ENCODE measurements at regions of chr3 and their contacts with region 1.

Region 1: DNA sequence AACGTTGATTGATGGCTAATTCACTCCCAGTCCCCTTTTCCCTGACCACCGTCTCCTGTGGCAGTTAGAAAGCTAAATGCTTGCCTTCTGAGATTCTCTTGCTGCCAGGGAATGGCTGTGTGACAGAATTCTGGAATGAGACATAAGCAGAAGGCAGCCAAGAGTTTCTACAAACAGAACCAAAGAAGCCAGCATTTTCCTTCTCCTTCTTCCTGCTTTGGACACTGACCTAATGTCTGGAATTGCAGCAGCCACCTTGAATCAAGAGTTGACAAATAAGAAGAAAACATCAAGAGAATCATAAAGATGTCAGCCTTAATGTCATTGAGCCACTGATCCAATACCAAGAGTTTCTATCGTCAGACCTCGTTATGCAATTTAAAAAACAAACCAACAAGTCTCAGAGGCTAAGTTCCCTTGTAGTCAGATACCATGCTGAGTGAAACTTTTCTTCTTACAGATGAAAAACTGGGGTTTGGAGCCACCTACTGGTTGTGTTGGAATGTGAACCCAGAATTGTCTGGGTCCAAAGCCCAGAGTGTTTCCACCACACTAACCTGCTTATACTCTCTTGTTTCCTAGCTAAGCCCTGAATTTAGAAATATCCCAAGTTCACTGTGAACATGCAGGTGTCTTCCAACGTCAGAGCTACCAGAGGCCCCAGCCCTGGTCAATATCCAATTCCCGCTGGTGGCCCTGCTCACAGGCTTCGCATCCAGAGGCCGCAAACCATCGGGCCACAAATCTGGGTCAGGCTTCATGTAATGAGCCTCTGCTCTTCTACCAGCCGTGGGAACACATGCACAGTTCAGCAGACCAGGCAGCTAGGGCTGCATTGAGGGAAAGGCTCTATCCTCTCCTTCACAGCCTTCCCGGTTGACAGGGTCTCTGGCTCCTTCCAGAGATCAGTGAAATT is 42.5 kb downstream of the MCF2L2 start:
- DNase-seq: peak; percentile 18 to 77 (median 63)
- ATAC-seq: peak; percentile 87
- H3K4me3 ChIP-seq: no peak overlapping the region
- H3K4me3 Mint-ChIP-seq: no peak overlapping the region
- H3K27ac ChIP-seq: no peak overlapping the region
- H3K27ac Mint-ChIP-seq: no peak overlapping the region
- H3K4me1 ChIP-seq: no peaks in the 10 kb centered on the region
- H3K4me1 Mint-ChIP-seq: peaks cover 2% of the 10 kb centered on the region
- H3K27me3 ChIP-seq: no peaks in the 10 kb centered on the region
- H3K27me3 Mint-ChIP-seq: no peaks in the 10 kb centered on the region
- CTCF ChIP-seq: peak; percentile 76

Region 2: GRCh38 chr3:182909318-182910040 is 476.5 kb before region 1 on chr3:
- CTCF ChIA-PET with region 1: no interaction called
- POLR2A ChIA-PET with region 1: no interaction called
- intact Hi-C with region 1: loop called (anchors 2 kb)
- DNase-seq: peak in 2 of 9 experiments; percentile 28 to 49
- ATAC-seq: peak; percentile 41
- H3K4me3 ChIP-seq: no peak overlapping the region
- H3K4me3 Mint-ChIP-seq: no peak overlapping the region
- H3K27ac ChIP-seq: no peak overlapping the region
- H3K27ac Mint-ChIP-seq: no peak overlapping the region
- H3K4me1 ChIP-seq: peaks cover 20% of the 10 kb centered on the region
- H3K4me1 Mint-ChIP-seq: peaks cover 43% of the 10 kb centered on the region
- H3K27me3 ChIP-seq: no peaks in the 10 kb centered on the region
- H3K27me3 Mint-ChIP-seq: no peaks in the 10 kb centered on the region
- CTCF ChIP-seq: peak; percentile 70

Region 3: GRCh38 chr3:183122257-183122932 is 263.6 kb before region 1 on chr3:
- CTCF ChIA-PET with region 1: interaction called, 156 read pairs
- POLR2A ChIA-PET with region 1: no interaction called
- intact Hi-C with region 1: loop called (anchors 1 kb)
- DNase-seq: peak in 2 of 9 experiments; percentile 58 to 69
- ATAC-seq: peak; percentile 65
- H3K4me3 ChIP-seq: no peak overlapping the region
- H3K4me3 Mint-ChIP-seq: no peak overlapping the region
- H3K27ac ChIP-seq: no peak overlapping the region
- H3K27ac Mint-ChIP-seq: no peak overlapping the region
- H3K4me1 ChIP-seq: no peaks in the 10 kb centered on the region
- H3K4me1 Mint-ChIP-seq: no peaks in the 10 kb centered on the region
- H3K27me3 ChIP-seq: no peaks in the 10 kb centered on the region
- H3K27me3 Mint-ChIP-seq: peaks cover 6% of the 10 kb centered on the region
- CTCF ChIP-seq: peak; percentile 93

Region 4: GRCh38 chr3:183188895-183189462 is 197.0 kb before region 1 on chr3:
- CTCF ChIA-PET with region 1: interaction called, 188 read pairs
- POLR2A ChIA-PET with region 1: interaction called, 3 read pairs
- intact Hi-C with region 1: loop called (anchors 1 kb)
- DNase-seq: peak in 4 of 9 experiments; percentile 24 to 50 (median 38)
- ATAC-seq: no peak
- H3K4me3 ChIP-seq: no peak overlapping the region
- H3K4me3 Mint-ChIP-seq: no peak overlapping the region
- H3K27ac ChIP-seq: no peak overlapping the region
- H3K27ac Mint-ChIP-seq: no peak overlapping the region
- H3K4me1 ChIP-seq: no peaks in the 10 kb centered on the region
- H3K4me1 Mint-ChIP-seq: no peaks in the 10 kb centered on the region
- H3K27me3 ChIP-seq: no peaks in the 10 kb centered on the region
- H3K27me3 Mint-ChIP-seq: no peaks in the 10 kb centered on the region
- CTCF ChIP-seq: no peak

Region 5: DNA sequence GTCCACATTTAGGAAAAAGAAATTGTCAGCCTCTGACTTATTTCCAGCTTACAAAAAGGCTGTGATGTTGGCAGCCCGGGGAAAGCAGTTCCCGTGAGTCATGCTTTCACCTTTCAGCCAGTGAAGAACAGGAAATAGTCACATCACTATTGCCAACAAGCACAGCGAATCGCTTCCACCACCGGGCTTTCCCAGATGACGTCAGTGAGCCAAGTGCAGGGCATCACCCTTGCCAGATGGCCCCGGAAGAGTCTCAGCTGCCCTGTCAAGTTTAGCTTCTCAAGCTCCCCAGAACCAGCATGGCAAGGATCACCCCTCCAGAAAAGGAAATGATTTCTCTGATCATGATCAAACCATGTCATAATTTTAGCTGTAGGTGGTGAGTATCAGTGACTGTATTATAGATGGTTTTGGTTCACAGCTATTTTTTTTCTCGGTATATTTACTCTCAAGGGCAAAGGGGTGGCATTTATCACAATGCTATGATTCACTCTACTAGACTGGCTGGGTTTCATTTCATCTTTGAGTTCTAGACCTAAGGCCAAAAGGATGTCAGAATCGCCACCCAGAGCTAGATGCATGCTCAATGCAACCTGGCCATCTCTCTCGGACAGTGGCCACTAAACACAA is 100.0 kb before region 1 on chr3:
- CTCF ChIA-PET with region 1: interaction called, 3 read pairs
- POLR2A ChIA-PET with region 1: no interaction called
- intact Hi-C with region 1: loop called in 1 of 2 experiments (anchors 5 kb)
- DNase-seq: peak; percentile 78 to 98 (median 88)
- ATAC-seq: peak; percentile 91
- H3K4me3 ChIP-seq: peak overlapping the region in 1 of 2 experiments; percentile 6
- H3K4me3 Mint-ChIP-seq: peak overlapping the region; percentile 58
- H3K27ac ChIP-seq: peak overlapping the region; percentile 2 to 90
- H3K27ac Mint-ChIP-seq: peak overlapping the region; percentile 95
- H3K4me1 ChIP-seq: peaks cover 9% of the 10 kb centered on the region
- H3K4me1 Mint-ChIP-seq: peaks cover 24% of the 10 kb centered on the region
- H3K27me3 ChIP-seq: no peaks in the 10 kb centered on the region
- H3K27me3 Mint-ChIP-seq: no peaks in the 10 kb centered on the region
- CTCF ChIP-seq: no peak

Region 6: GRCh38 chr3:183766745-183767606 is 381.0 kb after region 1 on chr3:
- CTCF ChIA-PET with region 1: interaction called, 7 read pairs
- POLR2A ChIA-PET with region 1: no interaction called
- intact Hi-C with region 1: loop called (anchors 1 to 2 kb)
- DNase-seq: peak; percentile 42 to 82 (median 72)
- ATAC-seq: peak; percentile 91
- H3K4me3 ChIP-seq: no peak overlapping the region
- H3K4me3 Mint-ChIP-seq: no peak overlapping the region
- H3K27ac ChIP-seq: no peak overlapping the region
- H3K27ac Mint-ChIP-seq: no peak overlapping the region
- H3K4me1 ChIP-seq: no peaks in the 10 kb centered on the region
- H3K4me1 Mint-ChIP-seq: peaks cover 4% of the 10 kb centered on the region
- H3K27me3 ChIP-seq: no peaks in the 10 kb centered on the region
- H3K27me3 Mint-ChIP-seq: no peaks in the 10 kb centered on the region
- CTCF ChIP-seq: peak; percentile 77

Region 7: DNA sequence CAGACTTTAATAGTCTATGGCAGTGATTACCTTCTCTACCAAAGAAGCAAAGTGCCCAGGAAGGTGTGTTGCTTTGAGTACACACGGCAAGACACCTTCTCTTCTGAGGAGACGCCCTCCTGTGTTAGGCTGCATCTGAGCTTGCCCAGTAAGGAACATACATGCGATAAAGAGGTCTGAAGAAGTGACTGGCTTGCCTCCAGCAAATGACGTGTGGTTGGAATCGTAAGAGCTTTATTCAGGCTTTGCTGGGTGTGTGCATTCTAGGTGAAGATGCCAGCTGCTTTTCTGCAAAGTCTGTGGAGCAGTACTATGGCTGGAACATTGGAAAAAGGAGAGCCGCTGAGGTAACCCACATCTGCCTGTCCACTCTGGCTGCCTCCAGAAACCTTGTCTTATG is 417.0 kb after region 1 on chr3:
- CTCF ChIA-PET with region 1: no interaction called
- POLR2A ChIA-PET with region 1: no interaction called
- intact Hi-C with region 1: no loop called
- DNase-seq: no peak
- ATAC-seq: no peak
- H3K4me3 ChIP-seq: no peak overlapping the region
- H3K4me3 Mint-ChIP-seq: no peak overlapping the region
- H3K27ac ChIP-seq: no peak overlapping the region
- H3K27ac Mint-ChIP-seq: no peak overlapping the region
- H3K4me1 ChIP-seq: no peaks in the 10 kb centered on the region
- H3K4me1 Mint-ChIP-seq: no peaks in the 10 kb centered on the region
- H3K27me3 ChIP-seq: no peaks in the 10 kb centered on the region
- H3K27me3 Mint-ChIP-seq: no peaks in the 10 kb centered on the region
- CTCF ChIP-seq: no peak

Measured in CD8-positive, alpha-beta T cell (primary cell).